ENCODE measurements at regions of chr18 and their contacts with region 1.

Region 1: DNA sequence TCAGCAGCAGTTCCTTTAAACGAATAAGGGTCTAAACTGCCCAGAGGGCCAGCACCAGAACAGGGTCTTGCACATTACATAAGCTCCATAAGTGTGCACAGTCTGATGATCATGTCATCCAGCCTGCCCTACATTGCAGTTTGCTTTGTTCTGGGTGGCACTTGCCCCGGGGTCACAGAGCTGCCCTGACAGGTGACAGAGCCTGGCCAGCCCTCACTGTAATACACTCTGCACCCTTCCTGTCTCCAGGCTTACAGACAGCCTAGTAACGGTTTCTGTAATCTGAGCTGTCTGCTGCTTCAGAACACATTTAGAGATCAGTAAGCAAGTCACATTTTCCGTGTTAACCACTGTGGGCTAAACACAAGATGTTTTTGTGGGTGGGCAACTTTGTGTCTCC is 213.3 kb downstream of the FAM210A start:
- DNase-seq: peak in 1 of 2 donors; percentile 25
- ATAC-seq: peak; percentile 25 to 97 (median 89)
- H3K4me3 ChIP-seq: no peak overlapping the region
- H3K27ac ChIP-seq: peak overlapping the region in 5 of 10 donors; percentile 21 to 57 (median 50)
- H3K4me1 ChIP-seq: peaks cover 0 to 18% (median 6%) of the 10 kb centered on the region in 9 donors
- H3K27me3 ChIP-seq: no peaks in the 10 kb centered on the region
- CTCF ChIP-seq: no peak

Region 2: GRCh38 chr18:13394801-13395200 is 118.2 kb before region 1 on chr18:
- intact Hi-C with region 1: loop called in 1 of 10 experiments (anchors 10 kb)
- DNase-seq: no peak
- ATAC-seq: no peak
- H3K4me3 ChIP-seq: no peak overlapping the region
- H3K27ac ChIP-seq: no peak overlapping the region
- H3K4me1 ChIP-seq: peaks cover 0 to 23% (median 6%) of the 10 kb centered on the region in 9 donors
- H3K27me3 ChIP-seq: no peaks in the 10 kb centered on the region
- CTCF ChIP-seq: no peak

Region 3: DNA sequence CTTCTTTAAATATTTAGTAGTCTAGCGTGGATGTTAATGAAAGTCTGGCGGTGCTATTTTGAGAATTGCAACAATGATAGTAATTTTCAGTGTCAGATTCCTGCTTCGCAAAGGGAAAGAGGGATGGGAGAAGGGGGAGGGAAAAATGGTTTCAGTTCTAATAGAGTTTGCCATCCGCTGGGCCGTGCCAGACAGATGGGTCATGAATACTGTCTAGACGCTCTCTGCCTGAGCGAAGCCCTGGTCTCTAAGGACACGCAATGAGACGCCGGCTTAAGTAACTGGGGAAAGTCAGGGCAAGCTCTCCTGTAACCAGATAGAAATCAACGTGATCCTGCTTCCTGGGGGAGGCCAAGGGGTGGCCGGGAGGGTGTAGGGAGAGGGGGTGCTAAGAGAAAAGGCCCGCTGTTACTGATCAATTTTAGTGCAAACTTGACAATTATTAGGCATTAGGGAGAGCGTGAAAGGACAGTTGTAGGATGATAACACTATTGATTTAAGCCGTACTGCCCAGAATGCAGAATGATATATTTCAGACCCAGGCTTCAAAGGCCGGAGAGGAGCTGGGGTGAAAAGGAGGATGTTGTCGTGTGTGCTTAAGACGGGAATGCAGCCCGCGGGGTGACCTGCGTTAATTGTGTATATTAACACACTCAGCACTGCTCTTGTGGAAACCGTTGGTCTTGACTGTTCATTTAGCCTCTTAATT is 65.2 kb before region 1 on chr18:
- intact Hi-C with region 1: loop called in 1 of 10 experiments (anchors 10 kb)
- DNase-seq: peak in 1 of 2 donors; percentile 34
- ATAC-seq: peak in 4 of 8 donors; percentile 15 to 57 (median 40)
- H3K4me3 ChIP-seq: no peak overlapping the region
- H3K27ac ChIP-seq: peak overlapping the region in 2 of 10 donors; percentile 23 to 46
- H3K4me1 ChIP-seq: peaks cover 14 to 75% (median 32%) of the 10 kb centered on the region in 9 donors
- H3K27me3 ChIP-seq: no peaks in the 10 kb centered on the region
- CTCF ChIP-seq: no peak

Measured in heart right ventricle (tissue), 16 donors.